Naive thymus-derived CD8-positive, alpha-beta T cell (primary cell): ENCODE measurements at regions of chr3 and their contacts with region 1.

Region 1: GRCh38 chr3:88058591-88059368 is at the starts of genes CGGBP1 and ZNF654:
- DNase-seq: peak; percentile 87 to 100 (median 99)
- ATAC-seq: peak; percentile 91 to 92
- H3K4me3 Mint-ChIP-seq: peak within 1 kb of the TSS; percentile 92 to 100 (median 98)
- H3K27ac Mint-ChIP-seq: peak within 1 kb of the TSS; percentile 94 to 99 (median 98)
- H3K4me1 Mint-ChIP-seq: peaks cover 27 to 73% (median 58%) of the 10 kb centered on the region in 4 donors
- H3K27me3 Mint-ChIP-seq: no peaks in the 10 kb centered on the region
- polyA plus RNA-seq, gene CGGBP1: 85.8 to 97.2 (median 92.1) TPM
- polyA plus RNA-seq, gene ZNF654: 11.1 to 13.9 (median 11.2) TPM

Region 2: DNA sequence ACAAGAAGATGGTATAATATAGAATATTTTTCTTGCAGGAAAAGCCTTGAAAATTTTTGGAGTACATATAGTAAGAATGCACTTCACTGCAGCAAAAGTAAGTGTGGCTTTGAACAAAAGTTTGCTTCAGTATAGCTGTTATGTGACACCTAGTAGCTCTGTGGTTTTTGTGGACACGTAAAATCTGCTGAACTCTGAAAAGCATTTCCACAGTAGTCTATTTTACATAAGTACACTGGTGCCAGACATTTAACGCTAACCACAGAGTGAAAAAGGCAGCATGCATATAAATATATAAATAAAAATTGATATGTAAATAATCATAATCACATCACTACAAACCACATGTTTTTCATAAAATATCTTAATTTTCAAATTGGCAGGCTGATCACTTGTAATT is 39.8 kb before region 1 on chr3:
- POLR2A ChIA-PET with region 1: no interaction called
- DNase-seq: no peak
- ATAC-seq: peak in 1 of 2 donors; percentile 39
- H3K4me3 Mint-ChIP-seq: no peak overlapping the region
- H3K27ac Mint-ChIP-seq: no peak overlapping the region
- H3K4me1 Mint-ChIP-seq: peaks cover 2 to 10% (median 6%) of the 10 kb centered on the region in 4 donors
- H3K27me3 Mint-ChIP-seq: peaks cover 0 to 3% (median 0%) of the 10 kb centered on the region in 5 donors

Region 3: DNA sequence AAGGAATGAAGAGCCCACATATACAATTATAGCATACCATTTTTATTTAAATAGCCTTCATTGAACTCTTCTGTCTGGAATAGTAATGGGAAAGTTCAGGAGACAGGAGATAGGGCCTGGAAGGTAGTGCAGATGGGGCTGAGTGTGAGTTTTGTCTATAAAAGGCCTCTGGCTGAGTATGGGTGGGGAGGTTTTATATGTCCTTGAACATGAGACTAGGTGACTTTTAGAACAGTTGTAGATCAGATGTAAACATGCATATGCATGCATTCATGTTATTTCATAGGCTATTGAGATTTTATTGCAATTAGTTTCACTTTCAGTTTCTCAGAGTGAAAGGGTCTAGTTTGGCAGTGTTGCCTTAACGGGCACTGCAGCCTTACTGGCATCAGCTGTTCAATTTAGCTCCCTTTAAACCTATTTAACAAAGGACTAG is 27.1 kb before region 1 on chr3:
- POLR2A ChIA-PET with region 1: interaction called, 27 read pairs
- DNase-seq: peak in 5 of 10 donors; percentile 2 to 55 (median 41)
- ATAC-seq: peak; percentile 82 to 92
- H3K4me3 Mint-ChIP-seq: peak overlapping the region; percentile 71 to 94 (median 86)
- H3K27ac Mint-ChIP-seq: peak overlapping the region; percentile 87 to 95 (median 91)
- H3K4me1 Mint-ChIP-seq: peaks cover 5 to 34% (median 31%) of the 10 kb centered on the region in 4 donors
- H3K27me3 Mint-ChIP-seq: no peaks in the 10 kb centered on the region

Region 4: GRCh38 chr3:88075072-88075471 is 16.3 kb after region 1 on chr3:
- POLR2A ChIA-PET with region 1: no interaction called
- DNase-seq: no peak
- ATAC-seq: no peak
- H3K4me3 Mint-ChIP-seq: peak overlapping the region in 3 of 10 donors; percentile 1 to 23 (median 9)
- H3K27ac Mint-ChIP-seq: peak overlapping the region in 1 of 10 donors; percentile 48
- H3K4me1 Mint-ChIP-seq: peaks cover 31 to 70% (median 56%) of the 10 kb centered on the region in 4 donors
- H3K27me3 Mint-ChIP-seq: no peaks in the 10 kb centered on the region